ENCODE measurements at regions of chr12 and their contacts with region 1.

Region 1: GRCh38 chr12:459430-460258 is at the start of gene B4GALNT3:
- DNase-seq: peak; percentile 67
- H3K4me3 ChIP-seq: peak within 1 kb of the TSS; percentile 60
- H3K27ac ChIP-seq: peak within 1 kb of the TSS; percentile 47
- H3K4me1 ChIP-seq: no peaks in the 10 kb centered on the region
- H3K27me3 ChIP-seq: peaks cover 4% of the 10 kb centered on the region
- CTCF ChIP-seq: no peak
- total RNA-seq, gene B4GALNT3: 73.7 to 84.0 TPM

Region 2: DNA sequence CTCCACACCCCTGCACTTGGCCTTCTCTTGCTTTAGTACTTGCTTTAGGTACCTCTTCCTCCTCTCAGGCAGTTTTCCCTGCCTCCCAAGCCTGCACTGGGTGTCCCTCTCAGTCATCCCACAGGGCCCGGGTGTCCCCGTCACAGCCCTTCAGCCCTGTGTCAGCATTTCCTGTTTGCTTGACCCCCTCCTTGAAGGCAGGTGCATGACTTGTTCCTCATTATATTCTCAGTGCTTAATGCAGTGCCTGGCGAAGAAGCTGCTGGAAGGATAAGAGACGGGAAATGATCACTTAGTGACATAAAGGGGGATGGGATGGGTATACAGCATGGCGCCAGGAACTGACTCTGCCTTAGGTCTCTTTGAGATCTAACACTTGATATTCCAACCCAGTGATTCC is 331.6 kb before region 1 on chr12:
- intact Hi-C with region 1: no loop called
- DNase-seq: no peak
- H3K4me3 ChIP-seq: no peak overlapping the region
- H3K27ac ChIP-seq: no peak overlapping the region
- H3K4me1 ChIP-seq: no peaks in the 10 kb centered on the region
- H3K27me3 ChIP-seq: no peaks in the 10 kb centered on the region
- CTCF ChIP-seq: no peak

Region 3: GRCh38 chr12:503111-503761 is 43.6 kb after region 1 on chr12:
- intact Hi-C with region 1: loop called (anchors 5 kb)
- DNase-seq: peak; percentile 87
- H3K4me3 ChIP-seq: no peak overlapping the region
- H3K27ac ChIP-seq: peak overlapping the region; percentile 92
- H3K4me1 ChIP-seq: peaks cover 8% of the 10 kb centered on the region
- H3K27me3 ChIP-seq: no peaks in the 10 kb centered on the region
- CTCF ChIP-seq: no peak

Region 4: DNA sequence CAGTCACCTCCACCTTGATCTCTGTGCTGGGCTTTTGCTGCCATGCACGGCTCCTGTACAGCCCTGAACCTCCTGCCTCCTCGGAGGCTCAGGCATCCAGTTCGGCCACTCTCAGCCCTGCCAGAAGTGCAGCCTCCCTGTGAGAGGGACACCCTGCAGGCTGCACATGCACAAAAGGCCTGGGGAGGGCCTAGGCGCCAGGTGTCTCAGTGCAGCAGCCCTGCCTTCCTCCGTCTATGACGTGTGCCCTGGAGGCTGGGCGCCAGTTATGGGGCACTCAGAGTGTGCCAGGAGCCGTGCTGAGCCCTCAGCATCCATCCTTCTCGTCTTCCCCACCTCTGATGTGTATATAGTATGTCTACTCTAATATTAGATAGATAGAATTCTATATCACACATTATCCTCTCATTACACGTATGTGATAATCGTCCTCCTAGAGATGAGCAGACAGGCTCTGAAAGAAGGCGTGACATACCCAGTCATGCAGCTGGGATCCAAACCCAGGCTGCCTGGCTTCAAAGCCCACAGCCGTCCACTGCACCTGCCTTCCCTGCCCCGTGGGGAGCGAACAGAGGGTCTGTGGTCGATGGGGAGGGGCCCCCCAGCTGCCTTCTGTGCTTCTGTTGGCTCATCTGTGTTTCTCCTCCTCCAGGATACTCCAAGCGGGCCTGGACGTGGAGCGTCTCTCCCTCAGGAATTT is 101.2 kb after region 1 on chr12:
- intact Hi-C with region 1: no loop called
- DNase-seq: no peak
- H3K4me3 ChIP-seq: no peak overlapping the region
- H3K27ac ChIP-seq: no peak overlapping the region
- H3K4me1 ChIP-seq: no peaks in the 10 kb centered on the region
- H3K27me3 ChIP-seq: no peaks in the 10 kb centered on the region
- CTCF ChIP-seq: no peak